ENCODE measurements at regions of chr19 and their contacts with region 1.

Region 1: GRCh38 chr19:18281082-18282020 is at the start of gene JUND:
- DNase-seq: peak; percentile 98
- CTCF ChIP-seq: peak; percentile 3

Region 2: GRCh38 chr19:18224525-18225354 is 56.6 kb before region 1 on chr19:
- CTCF ChIA-PET with region 1: interaction called, 26 read pairs
- POLR2A ChIA-PET with region 1: interaction called, 11 read pairs
- DNase-seq: peak; percentile 97
- CTCF ChIP-seq: no peak

Region 3: GRCh38 chr19:18266771-18267686 is 14.3 kb before region 1 on chr19:
- CTCF ChIA-PET with region 1: interaction called, 24 read pairs
- POLR2A ChIA-PET with region 1: interaction called, 12 read pairs
- DNase-seq: no peak
- CTCF ChIP-seq: no peak

Region 4: DNA sequence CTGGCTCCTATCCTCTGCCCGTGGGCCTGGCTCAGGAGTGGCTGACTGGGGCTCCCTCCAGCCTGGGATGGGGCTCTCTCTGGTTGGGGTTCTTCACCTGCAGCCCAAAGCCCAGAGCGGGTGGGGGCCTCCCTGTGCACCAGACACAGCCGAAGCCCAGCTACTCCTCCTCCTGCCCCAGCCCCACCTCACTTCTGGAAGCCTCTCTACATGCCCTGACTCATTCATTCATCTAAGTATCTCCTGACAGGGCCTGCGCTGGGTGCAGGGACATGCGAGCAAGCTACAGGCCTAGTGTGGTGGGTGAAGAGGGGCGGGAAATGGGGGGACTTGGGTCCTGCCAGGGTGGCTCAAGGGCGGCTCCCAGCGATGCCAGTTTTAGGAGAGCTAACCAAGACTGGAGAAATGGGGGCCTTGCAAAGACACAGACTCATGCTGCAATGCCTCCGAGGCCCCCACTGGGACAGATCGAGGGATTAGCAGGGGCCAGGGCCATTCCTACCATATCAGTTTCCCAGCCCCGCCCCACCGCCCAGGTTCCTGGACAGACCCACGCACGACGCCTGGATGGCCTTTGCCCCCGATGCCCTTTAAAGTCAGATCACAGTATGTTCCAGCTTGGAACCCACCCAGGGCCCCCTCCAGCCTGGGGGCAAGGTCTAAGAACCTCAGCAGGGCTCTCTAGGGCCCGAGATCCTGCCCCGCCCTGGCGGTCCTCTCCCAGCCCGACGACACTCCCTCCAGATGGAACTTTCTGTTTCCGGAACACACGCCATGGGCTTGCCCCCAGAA is 29.0 kb after region 1 on chr19:
- CTCF ChIA-PET with region 1: interaction called, 141 read pairs
- POLR2A ChIA-PET with region 1: interaction called, 120 read pairs
- DNase-seq: no peak
- CTCF ChIP-seq: no peak

Region 5: GRCh38 chr19:18340190-18340989 is 59.0 kb after region 1 on chr19 and contains the start of gene PGPEP1:
- CTCF ChIA-PET with region 1: interaction called, 39 read pairs
- POLR2A ChIA-PET with region 1: interaction called, 12 read pairs
- DNase-seq: peak; percentile 91
- CTCF ChIP-seq: no peak

Region 6: DNA sequence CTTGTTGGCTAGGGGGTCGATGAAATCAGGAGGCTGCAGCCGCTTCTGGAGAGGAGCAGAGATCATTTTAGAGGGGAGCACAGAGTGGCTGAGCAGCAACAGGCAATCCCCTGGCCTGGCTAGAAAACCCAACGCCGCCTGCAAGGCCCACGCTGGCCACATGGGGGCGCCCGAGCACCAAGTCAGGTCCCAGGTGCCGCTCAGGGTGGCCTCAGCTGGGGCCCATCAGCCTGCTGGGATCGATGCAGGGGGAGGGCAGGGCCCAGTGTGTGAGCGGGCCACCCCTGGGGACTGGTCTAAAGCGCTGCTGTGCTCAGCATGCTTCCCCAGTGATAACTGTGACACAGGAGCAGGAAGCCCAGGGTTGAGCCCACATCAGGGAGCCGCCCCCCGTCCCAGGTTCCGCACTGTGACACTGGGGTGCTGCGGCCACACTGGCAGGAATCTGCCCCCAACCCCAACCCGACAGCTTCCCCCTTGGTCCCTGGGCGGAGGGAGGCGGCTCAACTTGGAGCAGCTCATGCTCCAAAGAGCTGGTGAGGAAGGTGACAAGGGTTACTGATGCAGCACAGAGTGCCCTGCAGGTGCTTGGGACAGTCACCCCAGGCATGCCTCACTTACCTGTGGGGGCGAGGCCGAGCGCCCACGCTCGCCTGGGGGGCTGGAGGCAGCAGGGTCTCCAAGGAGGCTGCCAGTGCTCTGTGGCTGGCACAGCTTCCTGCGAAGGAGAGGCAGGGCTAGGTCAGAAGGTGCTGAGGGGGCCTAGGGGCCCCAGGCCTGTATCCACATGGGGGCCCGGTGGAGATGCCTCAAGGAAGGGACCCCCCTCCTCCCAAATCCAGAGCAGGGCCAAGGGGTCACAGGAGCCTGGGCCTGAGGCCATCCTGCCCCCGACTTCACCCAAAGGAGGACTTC is 169.8 kb after region 1 on chr19:
- CTCF ChIA-PET with region 1: no interaction called
- POLR2A ChIA-PET with region 1: no interaction called
- DNase-seq: peak; percentile 91
- CTCF ChIP-seq: peak; percentile 98

Region 7: GRCh38 chr19:18541268-18541991 is 260.1 kb after region 1 on chr19:
- CTCF ChIA-PET with region 1: no interaction called
- POLR2A ChIA-PET with region 1: no interaction called
- DNase-seq: no peak
- CTCF ChIP-seq: no peak

Measured in GM10248 (cell line).